CD8-positive, alpha-beta T cell (primary cell): ENCODE measurements at regions of chr13 and their contacts with region 1.

Region 1: DNA sequence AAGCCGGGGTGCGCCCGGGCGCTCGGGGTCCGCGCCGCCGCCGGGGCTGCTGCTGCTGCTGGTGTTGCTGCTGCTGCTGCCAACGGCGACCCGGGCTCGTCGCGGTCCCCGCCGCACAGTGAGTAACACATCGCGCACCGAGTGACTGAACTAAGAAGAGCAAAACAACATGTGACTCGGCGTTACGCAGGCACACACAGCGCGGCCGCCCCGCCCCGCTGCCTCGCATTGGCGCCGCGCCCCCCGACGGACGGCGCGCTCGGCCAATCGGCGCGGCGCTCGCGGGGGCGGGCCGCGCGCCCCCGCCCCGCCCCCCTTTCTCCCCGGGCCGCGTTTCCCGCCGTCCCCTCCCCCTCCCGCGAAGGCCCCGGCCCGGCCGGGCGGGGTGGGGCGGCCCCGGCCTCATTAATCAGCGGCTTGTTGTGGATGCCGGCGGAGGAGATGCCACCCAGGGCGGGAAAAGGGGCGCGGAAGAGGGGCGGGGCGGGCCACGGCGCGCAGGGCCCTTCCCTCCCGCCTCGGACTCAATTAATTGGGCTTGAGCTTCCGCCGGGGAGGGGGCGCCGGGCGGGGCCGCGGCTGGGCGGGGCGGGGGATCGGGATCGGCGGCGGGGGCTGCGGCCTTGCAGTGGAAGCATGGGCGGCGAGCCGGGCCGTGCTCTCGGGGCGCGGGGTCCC is at the start of gene IRS2:
- DNase-seq: peak; percentile 84 to 95 (median 93)
- ATAC-seq: peak; percentile 84
- H3K4me3 ChIP-seq: peak within 1 kb of the TSS; percentile 45 to 76
- H3K4me3 Mint-ChIP-seq: peak within 1 kb of the TSS; percentile 87
- H3K27ac ChIP-seq: peak within 1 kb of the TSS in 1 of 2 experiments; percentile 63
- H3K27ac Mint-ChIP-seq: peak within 1 kb of the TSS; percentile 92
- H3K4me1 ChIP-seq: peaks cover 9% of the 10 kb centered on the region
- H3K4me1 Mint-ChIP-seq: peaks cover 24% of the 10 kb centered on the region
- H3K27me3 ChIP-seq: no peaks in the 10 kb centered on the region
- H3K27me3 Mint-ChIP-seq: no peaks in the 10 kb centered on the region
- CTCF ChIP-seq: no peak
- total RNA-seq, gene IRS2: 197 to 201 TPM

Region 2: DNA sequence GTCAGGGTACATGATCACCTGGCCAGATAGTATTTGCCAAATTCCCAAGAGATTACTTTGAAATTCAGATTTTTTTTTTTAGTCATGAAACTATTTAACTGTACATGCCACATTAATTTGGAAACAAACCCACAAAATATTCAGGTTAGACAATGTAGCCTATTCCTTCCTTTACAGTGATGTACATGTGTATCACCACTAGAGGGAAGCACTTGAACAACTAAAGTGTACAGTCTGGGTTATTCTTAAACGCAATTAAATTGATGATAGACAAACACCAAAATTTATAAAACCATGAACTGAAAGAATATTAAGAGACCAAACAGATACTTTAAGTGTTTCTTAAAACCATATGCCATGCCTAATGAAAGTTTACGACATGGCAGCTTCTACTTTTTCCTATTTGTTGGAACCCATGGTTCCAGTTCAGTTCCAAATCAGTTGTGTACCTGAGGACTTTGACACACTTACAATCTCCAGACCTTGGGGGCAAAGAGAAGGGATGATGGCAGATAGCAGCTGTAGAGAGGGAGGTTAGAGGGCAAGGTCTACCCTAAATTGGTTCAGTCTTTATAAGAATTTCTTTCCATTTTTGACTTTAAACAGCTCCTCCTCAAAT is 1464.3 kb before region 1 on chr13:
- CTCF ChIA-PET with region 1: no interaction called
- POLR2A ChIA-PET with region 1: no interaction called
- intact Hi-C with region 1: loop called in 1 of 2 experiments (anchors 10 kb)
- DNase-seq: peak in 2 of 9 experiments; percentile 38 to 48
- ATAC-seq: peak; percentile 72
- H3K4me3 ChIP-seq: no peak overlapping the region
- H3K4me3 Mint-ChIP-seq: no peak overlapping the region
- H3K27ac ChIP-seq: no peak overlapping the region
- H3K27ac Mint-ChIP-seq: no peak overlapping the region
- H3K4me1 ChIP-seq: no peaks in the 10 kb centered on the region
- H3K4me1 Mint-ChIP-seq: peaks cover 5% of the 10 kb centered on the region
- H3K27me3 ChIP-seq: no peaks in the 10 kb centered on the region
- H3K27me3 Mint-ChIP-seq: peaks cover 5% of the 10 kb centered on the region
- CTCF ChIP-seq: peak; percentile 82

Region 3: GRCh38 chr13:109145631-109146030 is 641.0 kb before region 1 on chr13:
- CTCF ChIA-PET with region 1: no interaction called
- POLR2A ChIA-PET with region 1: no interaction called
- intact Hi-C with region 1: loop called in 1 of 2 experiments (anchors 2 kb)
- DNase-seq: peak in 2 of 9 experiments; percentile 7 to 30
- ATAC-seq: no peak
- H3K4me3 ChIP-seq: no peak overlapping the region
- H3K4me3 Mint-ChIP-seq: no peak overlapping the region
- H3K27ac ChIP-seq: no peak overlapping the region
- H3K27ac Mint-ChIP-seq: no peak overlapping the region
- H3K4me1 ChIP-seq: no peaks in the 10 kb centered on the region
- H3K4me1 Mint-ChIP-seq: no peaks in the 10 kb centered on the region
- H3K27me3 ChIP-seq: peaks cover 0 to 3% of the 10 kb centered on the region in 2 experiments
- H3K27me3 Mint-ChIP-seq: peaks cover 28% of the 10 kb centered on the region
- CTCF ChIP-seq: no peak

Region 4: DNA sequence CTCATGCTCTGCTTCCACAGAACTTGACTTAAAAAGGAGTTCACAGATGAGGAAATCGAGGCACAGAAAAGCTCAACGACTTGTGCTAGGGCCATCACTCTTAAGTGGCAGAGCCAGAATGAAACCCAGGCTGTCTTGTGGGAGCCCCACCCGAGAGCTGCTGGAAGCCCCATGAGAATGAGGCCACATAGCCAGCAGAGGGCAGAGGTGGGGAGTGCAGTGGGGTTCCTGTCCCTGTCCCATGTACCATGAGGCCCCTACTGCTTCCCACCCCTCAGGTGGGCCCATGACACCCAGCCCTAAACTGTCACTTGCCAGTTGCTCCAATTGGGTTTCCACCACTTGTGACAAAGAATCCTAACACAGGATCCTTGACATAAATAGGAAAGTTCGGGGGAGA is 176.1 kb before region 1 on chr13:
- CTCF ChIA-PET with region 1: interaction called, 7 read pairs
- POLR2A ChIA-PET with region 1: no interaction called
- intact Hi-C with region 1: loop called (anchors 1 kb)
- DNase-seq: peak in 8 of 9 experiments; percentile 15 to 57 (median 40)
- ATAC-seq: peak; percentile 73
- H3K4me3 ChIP-seq: no peak overlapping the region
- H3K4me3 Mint-ChIP-seq: no peak overlapping the region
- H3K27ac ChIP-seq: no peak overlapping the region
- H3K27ac Mint-ChIP-seq: no peak overlapping the region
- H3K4me1 ChIP-seq: no peaks in the 10 kb centered on the region
- H3K4me1 Mint-ChIP-seq: no peaks in the 10 kb centered on the region
- H3K27me3 ChIP-seq: no peaks in the 10 kb centered on the region
- H3K27me3 Mint-ChIP-seq: no peaks in the 10 kb centered on the region
- CTCF ChIP-seq: no peak

Region 5: GRCh38 chr13:110715395-110716235 is 929.0 kb after region 1 on chr13:
- CTCF ChIA-PET with region 1: no interaction called
- POLR2A ChIA-PET with region 1: no interaction called
- intact Hi-C with region 1: loop called (anchors 2 to 10 kb)
- DNase-seq: peak; percentile 91 to 99 (median 95)
- ATAC-seq: peak; percentile 58
- H3K4me3 ChIP-seq: peak overlapping the region; percentile 68 to 100
- H3K4me3 Mint-ChIP-seq: peak overlapping the region; percentile 99
- H3K27ac ChIP-seq: peak overlapping the region; percentile 76 to 91
- H3K27ac Mint-ChIP-seq: peak overlapping the region; percentile 97
- H3K4me1 ChIP-seq: peaks cover 29% of the 10 kb centered on the region
- H3K4me1 Mint-ChIP-seq: peaks cover 34% of the 10 kb centered on the region
- H3K27me3 ChIP-seq: no peaks in the 10 kb centered on the region
- H3K27me3 Mint-ChIP-seq: no peaks in the 10 kb centered on the region
- CTCF ChIP-seq: no peak